ENCODE measurements at regions of chr9 and their contacts with region 1.

Region 1: GRCh38 chr9:70340572-70340971 is 73.9 kb downstream of the KLF9 start:
- DNase-seq: no peak
- H3K4me3 ChIP-seq: no peak overlapping the region
- H3K27ac ChIP-seq: no peak overlapping the region
- H3K4me1 ChIP-seq: no peaks in the 10 kb centered on the region
- H3K27me3 ChIP-seq: no peaks in the 10 kb centered on the region
- CTCF ChIP-seq: peak in 5 of 6 experiments; percentile 17 to 70 (median 61)
- POLR2A ChIP-seq: no peak

Region 2: GRCh38 chr9:69573651-69574050 is 766.9 kb before region 1 on chr9:
- intact Hi-C with region 1: no loop called
- DNase-seq: no peak
- H3K4me3 ChIP-seq: no peak overlapping the region
- H3K27ac ChIP-seq: no peak overlapping the region
- H3K4me1 ChIP-seq: peaks cover 0 to 14% (median 5%) of the 10 kb centered on the region in 3 donors
- H3K27me3 ChIP-seq: no peaks in the 10 kb centered on the region
- CTCF ChIP-seq: no peak
- POLR2A ChIP-seq: no peak

Region 3: GRCh38 chr9:70398145-70398556 is 57.6 kb after region 1 on chr9:
- intact Hi-C with region 1: loop called (anchors 10 kb)
- DNase-seq: no peak
- H3K4me3 ChIP-seq: peak overlapping the region in 1 of 4 donors; percentile 3
- H3K27ac ChIP-seq: peak overlapping the region in 3 of 4 donors; percentile 54 to 65 (median 56)
- H3K4me1 ChIP-seq: peaks cover 20 to 84% (median 39%) of the 10 kb centered on the region in 3 donors
- H3K27me3 ChIP-seq: no peaks in the 10 kb centered on the region
- CTCF ChIP-seq: no peak
- POLR2A ChIP-seq: no peak